HCT116 (cell line): ENCODE measurements at regions of chr7 and their contacts with region 1.

Region 1: DNA sequence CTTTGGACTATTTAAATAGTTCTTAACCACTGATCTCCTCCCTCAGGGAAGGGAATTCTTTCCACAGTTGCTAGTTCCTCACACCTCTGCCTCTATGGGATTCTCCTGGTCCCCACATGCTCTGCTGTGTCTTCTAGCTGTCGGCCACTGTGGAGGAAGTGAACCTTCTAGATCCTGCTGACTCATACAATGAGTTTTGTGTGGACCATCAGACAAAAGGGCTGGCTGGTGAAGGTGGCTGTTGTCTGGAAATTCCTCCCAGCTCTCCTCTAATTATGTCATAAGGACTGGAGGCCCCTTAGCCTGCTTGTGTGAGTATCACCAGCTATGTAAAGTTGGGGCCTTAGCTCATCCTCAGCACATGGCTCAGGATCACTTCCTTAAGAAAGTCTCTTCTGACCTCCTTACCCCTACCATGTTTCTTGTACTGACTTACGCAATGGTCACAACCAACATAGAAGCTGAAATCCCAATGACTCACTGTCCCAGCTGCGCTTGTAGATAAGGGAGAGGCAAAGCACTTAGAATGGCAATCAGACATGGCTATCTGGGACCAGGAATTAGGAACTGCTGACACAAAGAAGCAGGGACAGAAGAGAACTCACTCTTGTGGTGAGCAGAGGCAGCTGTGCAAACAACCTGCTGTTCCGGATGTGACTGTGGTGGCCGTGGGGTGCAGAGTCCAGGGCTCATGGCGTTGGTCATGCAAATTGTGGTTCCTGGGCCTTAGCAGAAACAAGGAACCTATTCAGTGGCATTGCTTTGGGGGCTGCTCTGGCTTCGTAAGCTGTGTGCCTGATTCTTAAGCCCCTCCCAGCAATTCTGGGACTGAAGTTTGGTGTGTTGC is 2.5 kb upstream of the MACC1 start:
- DNase-seq: no peak
- ATAC-seq: no peak
- H3K4me3 ChIP-seq: no peak overlapping the region
- H3K27ac ChIP-seq: no peak overlapping the region
- H3K4me1 ChIP-seq: peaks cover 8 to 50% of the 10 kb centered on the region in 2 experiments
- H3K27me3 ChIP-seq: no peaks in the 10 kb centered on the region
- CTCF ChIP-seq: no peak
- POLR2A ChIP-seq: no peak
- RAD21 ChIP-seq: no peak

Region 2: DNA sequence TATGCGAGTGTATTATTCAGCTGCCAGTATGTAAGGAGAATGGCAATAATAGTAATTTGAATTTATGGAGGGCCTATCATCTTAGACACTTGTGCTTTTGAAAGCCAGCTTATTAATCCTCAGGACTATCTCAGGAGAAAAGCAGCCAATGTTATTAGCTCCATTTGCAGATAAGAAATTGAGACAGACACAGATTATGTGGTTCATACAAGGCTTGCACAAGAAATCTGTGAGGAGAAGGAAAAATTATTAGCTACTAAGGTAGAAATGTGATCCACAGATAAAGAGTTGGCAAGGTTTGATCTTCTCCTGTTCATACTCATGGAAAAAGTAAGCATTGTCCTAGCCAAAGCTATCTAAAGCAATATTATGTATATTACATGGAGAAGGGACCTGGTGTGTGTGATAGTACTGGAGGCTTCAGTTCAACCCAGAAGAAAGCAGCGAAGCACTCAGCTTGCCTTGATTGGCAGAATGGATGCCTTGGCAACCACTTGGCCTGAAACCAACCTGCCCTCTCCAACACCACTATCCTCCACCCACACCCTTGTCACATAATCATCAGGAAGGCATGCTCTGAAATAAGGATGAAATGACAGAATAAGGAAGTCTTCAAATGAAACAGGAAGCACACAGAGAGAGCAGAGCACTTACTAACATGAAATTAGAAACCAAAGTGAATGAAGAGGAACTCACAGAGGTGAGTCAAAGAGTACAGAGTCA is 20.5 kb before region 1 on chr7:
- CTCF ChIA-PET with region 1: interaction called, 3 read pairs
- POLR2A ChIA-PET with region 1: interaction called, 5 read pairs
- RAD21 ChIA-PET with region 1: no interaction called
- intact Hi-C with region 1: loop called (anchors 1 kb)
- DNase-seq: peak; percentile 94
- ATAC-seq: peak; percentile 95
- H3K4me3 ChIP-seq: peak overlapping the region in 1 of 2 experiments; percentile 27; a peak in 2 of 4 replicates
- H3K27ac ChIP-seq: peak overlapping the region; percentile 47; the same call in 1 of the 2 replicates
- H3K4me1 ChIP-seq: peaks cover 20 to 39% of the 10 kb centered on the region in 2 experiments
- H3K27me3 ChIP-seq: no peaks in the 10 kb centered on the region
- CTCF ChIP-seq: no peak
- POLR2A ChIP-seq: no peak
- RAD21 ChIP-seq: no peak

Region 3: DNA sequence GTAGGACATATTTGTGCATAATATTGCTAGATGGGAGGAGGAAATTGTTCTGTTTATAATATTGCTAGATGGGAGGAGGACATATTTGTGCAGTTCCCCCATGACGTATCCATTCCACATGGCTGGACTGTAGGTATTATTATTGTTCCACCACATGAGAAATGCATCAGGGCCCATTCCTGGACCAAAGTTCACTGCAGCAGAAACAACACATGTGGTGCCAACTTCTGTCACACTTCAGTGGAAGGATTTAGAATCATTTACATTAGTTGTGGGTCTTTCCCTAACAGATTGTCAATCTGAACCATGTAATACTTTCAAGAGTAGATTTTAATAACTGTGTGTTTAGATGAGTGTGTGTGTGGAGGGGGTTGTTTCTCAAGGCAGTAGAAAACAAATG is 30.3 kb after region 1 on chr7:
- CTCF ChIA-PET with region 1: no interaction called
- POLR2A ChIA-PET with region 1: no interaction called
- RAD21 ChIA-PET with region 1: no interaction called
- intact Hi-C with region 1: no loop called
- DNase-seq: no peak
- ATAC-seq: no peak
- H3K4me3 ChIP-seq: no peak overlapping the region
- H3K27ac ChIP-seq: no peak overlapping the region
- H3K4me1 ChIP-seq: no peaks in the 10 kb centered on the region
- H3K27me3 ChIP-seq: no peaks in the 10 kb centered on the region
- CTCF ChIP-seq: no peak
- POLR2A ChIP-seq: no peak
- RAD21 ChIP-seq: no peak

Region 4: GRCh38 chr7:20330240-20330927 is 110.7 kb after region 1 on chr7 and contains the start of gene ITGB8:
- CTCF ChIA-PET with region 1: interaction called, 3 read pairs
- POLR2A ChIA-PET with region 1: no interaction called
- RAD21 ChIA-PET with region 1: no interaction called
- intact Hi-C with region 1: loop called (anchors 2 kb)
- DNase-seq: no peak
- ATAC-seq: peak; percentile 73
- H3K4me3 ChIP-seq: peak within 1 kb of the TSS; percentile 66 to 81
- H3K27ac ChIP-seq: peak within 1 kb of the TSS; percentile 86
- H3K4me1 ChIP-seq: peaks cover 3 to 18% of the 10 kb centered on the region in 2 experiments; a peak in 3 of 4 replicates
- H3K27me3 ChIP-seq: no peaks in the 10 kb centered on the region
- CTCF ChIP-seq: peak in 1 of 3 experiments; percentile 11; a peak in 1 of 6 replicates
- POLR2A ChIP-seq: peak; percentile 18
- RAD21 ChIP-seq: no peak
- total RNA-seq, gene ITGB8: 2.4 TPM

Region 5: DNA sequence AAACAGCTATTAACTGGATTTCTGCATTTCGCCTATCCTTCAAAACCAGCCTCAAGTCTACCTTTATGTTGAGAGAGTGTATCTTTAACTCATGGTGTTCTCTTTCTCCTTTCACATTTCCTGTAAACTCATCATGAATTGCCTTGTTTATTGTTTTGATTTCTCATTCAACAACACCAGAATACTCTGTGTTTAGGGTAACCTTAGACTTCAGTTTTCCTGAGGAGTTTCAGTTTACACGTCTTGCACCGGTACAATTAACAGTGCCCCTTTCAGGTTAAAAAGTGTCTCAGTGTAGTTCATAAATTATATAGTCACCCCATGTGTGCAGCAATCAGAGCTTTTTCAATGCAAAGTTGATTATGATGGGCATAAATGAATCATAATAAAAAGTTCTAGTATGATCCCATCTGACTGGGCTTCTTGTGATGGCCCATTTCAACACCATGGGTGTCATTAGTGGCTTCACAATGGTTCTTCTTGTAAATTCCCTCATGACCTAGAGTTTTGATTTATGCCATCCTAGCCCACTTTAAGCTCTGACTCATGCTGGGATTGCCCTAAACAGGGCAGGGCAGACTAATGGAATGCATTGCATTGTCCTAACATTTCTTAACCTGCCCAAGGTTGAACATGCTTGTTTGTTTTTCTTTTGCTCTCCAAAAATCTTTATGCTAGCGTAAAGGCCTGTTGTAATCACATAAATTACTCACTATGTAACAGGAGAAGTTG is 133.1 kb after region 1 on chr7:
- CTCF ChIA-PET with region 1: no interaction called
- POLR2A ChIA-PET with region 1: no interaction called
- RAD21 ChIA-PET with region 1: no interaction called
- intact Hi-C with region 1: loop called (anchors 5 kb)
- DNase-seq: peak; percentile 82
- ATAC-seq: peak; percentile 93
- H3K4me3 ChIP-seq: peak overlapping the region in 1 of 2 experiments; percentile 39; a peak in 2 of 4 replicates
- H3K27ac ChIP-seq: peak overlapping the region; percentile 65
- H3K4me1 ChIP-seq: peaks cover 28 to 33% of the 10 kb centered on the region in 2 experiments
- H3K27me3 ChIP-seq: no peaks in the 10 kb centered on the region
- CTCF ChIP-seq: no peak
- POLR2A ChIP-seq: no peak
- RAD21 ChIP-seq: no peak